Activated T-helper 2 cell treated with anti-CD3 and anti-CD28 coated beads, Interferon-gamma antibody, Interleukin-2, Interleukin-4, amounts not matched to agents 10 μg/mL and 5 μg/mL and 100 μg/mL, durations not matched to agents 14 hours and 24 hours and 36 hours (primary cell): ENCODE measurements at regions of chr3 and their contacts with region 1.

Region 1: GRCh38 chr3:105366326-105367062 is at the start of gene ALCAM:
- DNase-seq: peak; percentile 77
- H3K4me3 Mint-ChIP-seq: peak within 1 kb of the TSS; percentile 94
- H3K27ac Mint-ChIP-seq: peak within 1 kb of the TSS; percentile 100
- H3K4me1 Mint-ChIP-seq: peaks cover 44% of the 10 kb centered on the region
- H3K27me3 Mint-ChIP-seq: peaks cover 22% of the 10 kb centered on the region
- total RNA-seq, gene ALCAM: 36.7 and 37.3 TPM in 2 replicates

Region 2: GRCh38 chr3:104564045-104564643 is 802.4 kb before region 1 on chr3:
- intact Hi-C with region 1: loop called (anchors 1 kb)
- DNase-seq: no peak
- H3K4me3 Mint-ChIP-seq: no peak overlapping the region
- H3K27ac Mint-ChIP-seq: no peak overlapping the region
- H3K4me1 Mint-ChIP-seq: no peaks in the 10 kb centered on the region
- H3K27me3 Mint-ChIP-seq: no peaks in the 10 kb centered on the region

Region 3: DNA sequence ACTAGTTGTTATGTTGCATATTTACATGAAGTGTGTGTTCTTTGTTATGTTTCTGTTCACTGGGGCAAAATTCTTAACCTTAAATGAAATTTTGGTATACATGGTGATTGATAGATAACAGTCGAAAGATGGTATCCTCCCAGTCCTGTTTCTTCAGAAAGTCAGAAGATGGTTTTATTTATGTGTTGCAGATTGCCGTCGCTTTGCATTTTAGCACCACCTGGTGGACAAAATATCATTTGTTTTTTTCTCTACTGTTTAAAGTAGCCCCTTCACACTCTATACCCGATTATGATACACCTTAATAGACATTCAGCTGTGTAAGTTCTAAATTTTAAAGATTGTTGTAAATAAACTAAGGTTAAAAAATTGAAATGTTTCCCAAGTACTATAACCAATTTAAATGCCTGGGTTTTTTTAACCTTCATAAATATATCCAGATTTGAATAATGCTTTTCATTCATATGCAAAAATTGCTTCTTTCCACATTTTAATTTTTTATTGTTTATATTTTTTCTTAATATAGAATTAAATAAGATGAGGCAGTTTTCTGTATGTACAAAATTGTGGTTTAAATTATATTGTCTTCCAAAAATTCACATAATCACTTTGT is 152.4 kb after region 1 on chr3:
- intact Hi-C with region 1: loop called (anchors 2 kb)
- DNase-seq: no peak
- H3K4me3 Mint-ChIP-seq: no peak overlapping the region
- H3K27ac Mint-ChIP-seq: no peak overlapping the region
- H3K4me1 Mint-ChIP-seq: peaks cover 12% of the 10 kb centered on the region
- H3K27me3 Mint-ChIP-seq: no peaks in the 10 kb centered on the region

Region 4: DNA sequence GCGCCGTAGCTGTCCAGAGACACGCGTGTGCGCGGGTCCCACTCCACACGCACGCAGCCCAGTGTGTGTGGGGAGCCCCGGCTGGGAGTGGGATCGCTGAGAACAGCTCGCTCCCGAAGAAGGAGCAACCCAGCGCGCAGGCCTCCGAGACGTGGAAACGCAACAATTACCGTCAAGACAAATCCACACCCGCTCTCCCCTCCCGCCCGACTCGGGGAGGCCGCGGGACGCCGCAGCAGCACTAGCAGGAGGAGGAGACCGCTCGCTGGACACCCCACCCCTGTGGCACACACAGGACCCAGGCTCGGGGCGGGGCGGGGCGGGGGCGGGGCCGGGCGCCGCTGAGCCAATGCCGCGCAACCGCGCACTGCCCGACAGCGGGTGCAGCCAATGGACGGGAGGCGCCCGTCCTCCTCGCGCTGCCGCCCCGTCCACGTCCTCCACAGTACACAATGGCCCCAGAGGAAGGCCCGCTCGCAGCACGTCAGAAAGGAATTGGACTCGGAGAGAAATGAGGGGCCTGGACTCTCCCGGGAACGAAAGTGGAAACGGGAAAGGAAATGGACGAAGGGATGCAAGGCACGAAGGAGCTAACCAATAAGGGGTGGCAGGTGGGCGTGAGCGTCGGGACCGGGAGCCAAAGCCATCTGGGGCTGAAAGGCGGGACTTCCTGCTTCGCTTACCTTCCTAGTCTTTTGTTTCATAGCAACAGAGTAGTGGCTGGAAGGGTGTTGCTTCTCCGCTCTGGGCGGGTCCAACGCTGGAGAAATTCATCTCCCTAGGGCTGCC is 502.4 kb after region 1 on chr3 and contains the start of gene CBLB:
- intact Hi-C with region 1: loop called (anchors 2 kb)
- DNase-seq: peak; percentile 82
- H3K4me3 Mint-ChIP-seq: peak within 1 kb of the TSS; percentile 89
- H3K27ac Mint-ChIP-seq: peak within 1 kb of the TSS; percentile 93
- H3K4me1 Mint-ChIP-seq: peaks cover 26% of the 10 kb centered on the region
- H3K27me3 Mint-ChIP-seq: no peaks in the 10 kb centered on the region
- total RNA-seq, gene CBLB: 146 and 152 TPM in 2 replicates

Region 5: GRCh38 chr3:106428565-106428994 is 1062.1 kb after region 1 on chr3:
- intact Hi-C with region 1: loop called (anchors 1 kb)
- DNase-seq: no peak
- H3K4me3 Mint-ChIP-seq: no peak overlapping the region
- H3K27ac Mint-ChIP-seq: peak overlapping the region; percentile 93
- H3K4me1 Mint-ChIP-seq: peaks cover 44% of the 10 kb centered on the region
- H3K27me3 Mint-ChIP-seq: no peaks in the 10 kb centered on the region

Region 6: DNA sequence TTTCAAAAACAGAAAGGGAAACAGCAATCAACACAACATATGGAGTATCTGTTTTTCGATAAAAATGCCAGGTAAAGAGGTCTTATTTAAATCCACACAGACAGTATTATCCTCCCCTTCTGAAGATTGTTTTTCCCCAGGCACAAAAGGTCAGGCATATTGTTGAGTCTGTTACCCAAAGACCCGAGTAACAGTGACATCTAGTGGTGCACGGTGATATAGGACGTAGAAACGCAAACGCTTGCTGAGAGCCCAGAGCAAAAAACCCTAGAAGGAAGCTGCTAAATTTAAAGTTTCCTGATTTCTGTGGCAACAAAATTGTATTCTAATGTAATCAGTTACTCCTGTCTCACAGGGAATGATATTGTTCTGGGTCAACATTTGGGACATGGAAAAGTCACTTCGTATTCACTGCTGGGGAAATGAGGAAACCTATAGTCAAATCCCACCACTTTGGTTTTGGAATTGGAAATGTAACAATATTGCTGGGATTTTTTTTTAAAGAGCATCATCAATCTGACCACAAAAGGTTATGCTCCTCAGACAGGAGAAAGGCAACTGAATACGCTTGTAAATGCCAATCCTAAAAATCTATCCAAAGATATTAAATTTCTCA is 1698.1 kb after region 1 on chr3:
- intact Hi-C with region 1: loop called (anchors 5 kb)
- DNase-seq: peak; percentile 33
- H3K4me3 Mint-ChIP-seq: no peak overlapping the region
- H3K27ac Mint-ChIP-seq: no peak overlapping the region
- H3K4me1 Mint-ChIP-seq: peaks cover 12% of the 10 kb centered on the region
- H3K27me3 Mint-ChIP-seq: peaks cover 8% of the 10 kb centered on the region